Activated CD4-positive, alpha-beta memory T cell treated with anti-CD3 and anti-CD28 coated beads for 36 hours (primary cell): ENCODE measurements at regions of chr11 and their contacts with region 1.

Region 1: GRCh38 chr11:65329944-65330403 is 3.7 kb upstream of the DPF2 start:
- DNase-seq: peak; percentile 88
- H3K4me3 Mint-ChIP-seq: no peak overlapping the region
- H3K27ac Mint-ChIP-seq: no peak overlapping the region
- H3K4me1 Mint-ChIP-seq: peaks cover 12% of the 10 kb centered on the region
- H3K27me3 Mint-ChIP-seq: peaks cover 3% of the 10 kb centered on the region

Region 2: GRCh38 chr11:64854534-64855429 is 475.2 kb before region 1 on chr11:
- CTCF ChIA-PET with region 1: no interaction called
- POLR2A ChIA-PET with region 1: interaction called, 4 read pairs
- intact Hi-C with region 1: loop called (anchors 5 kb)
- DNase-seq: peak; percentile 75
- H3K4me3 Mint-ChIP-seq: peak overlapping the region; percentile 45
- H3K27ac Mint-ChIP-seq: peak overlapping the region; percentile 79
- H3K4me1 Mint-ChIP-seq: peaks cover 88% of the 10 kb centered on the region
- H3K27me3 Mint-ChIP-seq: no peaks in the 10 kb centered on the region

Region 3: DNA sequence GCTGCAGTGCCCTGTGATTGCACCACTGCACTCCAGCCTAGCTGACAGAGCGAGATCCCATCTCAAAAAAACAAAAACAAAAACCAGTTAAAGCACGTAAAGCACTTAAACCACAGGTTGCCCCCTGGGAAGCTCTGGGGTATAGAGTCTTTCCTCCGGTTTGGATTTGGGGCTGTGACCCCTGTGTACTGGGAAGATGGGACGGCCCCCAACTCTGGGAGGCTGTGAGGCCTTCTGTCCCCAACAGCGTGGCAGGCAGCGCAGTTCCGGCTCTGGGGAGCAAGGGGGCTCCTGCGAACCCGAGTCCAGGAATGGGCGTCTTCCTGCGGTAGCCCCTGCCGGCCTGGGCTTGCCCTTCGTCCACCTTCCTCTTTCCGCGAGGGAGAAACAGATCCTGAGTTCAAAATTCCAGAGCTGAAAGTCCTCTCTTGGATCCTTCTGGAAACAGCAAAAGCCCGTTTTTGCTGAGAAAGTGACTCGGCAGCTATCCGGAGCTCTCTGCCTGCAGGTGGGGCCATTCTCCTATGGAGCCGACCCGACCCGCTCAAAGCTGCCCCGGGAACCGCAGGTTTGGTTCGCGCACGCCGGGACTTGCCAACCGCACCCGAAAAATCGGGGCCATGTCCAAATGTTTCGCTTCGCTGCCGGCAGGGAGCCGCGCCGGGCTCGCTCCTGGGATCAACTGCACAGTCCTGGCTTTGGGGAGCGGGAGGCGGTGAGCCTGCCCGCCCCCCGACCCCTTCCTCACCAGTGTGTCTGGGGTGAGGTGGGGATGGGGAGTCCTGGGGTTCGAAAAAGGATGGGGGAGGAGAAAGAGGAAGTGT is 104.5 kb before region 1 on chr11:
- CTCF ChIA-PET with region 1: interaction called, 109 read pairs
- POLR2A ChIA-PET with region 1: interaction called, 3 read pairs
- intact Hi-C with region 1: no loop called
- DNase-seq: peak; percentile 76
- H3K4me3 Mint-ChIP-seq: peak overlapping the region; percentile 72
- H3K27ac Mint-ChIP-seq: no peak overlapping the region
- H3K4me1 Mint-ChIP-seq: peaks cover 7% of the 10 kb centered on the region
- H3K27me3 Mint-ChIP-seq: peaks cover 24% of the 10 kb centered on the region

Region 4: DNA sequence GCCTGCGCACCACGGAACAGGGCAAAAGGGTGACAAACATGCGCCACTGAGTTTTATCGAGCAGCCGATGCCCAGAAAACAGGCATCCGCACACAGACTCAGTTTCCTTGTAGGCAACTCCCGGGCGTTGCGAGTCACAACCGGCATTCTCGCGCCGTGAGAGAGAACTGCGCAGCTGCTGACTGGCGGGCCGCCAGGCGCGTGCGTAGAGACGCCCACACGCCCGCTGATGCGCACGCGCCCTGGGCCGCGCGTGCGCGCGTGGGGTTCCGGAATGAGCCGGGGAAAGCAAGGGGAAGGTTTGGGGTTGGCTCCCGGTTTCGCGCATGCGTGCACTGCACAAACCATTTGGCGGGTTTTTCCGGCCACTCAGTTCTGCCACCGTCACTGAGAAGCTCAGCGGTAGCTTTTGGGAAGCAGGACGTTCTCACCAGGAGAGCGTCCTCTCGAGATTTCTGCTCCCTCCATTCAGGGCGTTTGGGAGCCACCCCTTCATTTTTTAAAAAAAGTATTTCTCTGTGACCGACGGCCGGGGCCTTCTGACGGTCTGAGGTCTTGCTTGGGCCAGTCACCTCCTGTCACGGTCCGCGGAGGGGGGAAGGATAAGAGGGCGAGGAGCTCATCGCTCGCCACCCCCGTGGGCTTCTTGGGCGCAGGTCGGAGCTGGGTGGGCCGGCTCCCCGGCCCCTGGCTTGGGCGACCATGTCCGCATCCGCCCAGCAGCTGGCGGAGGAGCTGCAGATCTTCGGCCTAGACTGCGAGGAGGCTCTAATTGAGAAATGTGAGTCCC is 68.2 kb before region 1 on chr11 and contains the start of gene POLA2:
- CTCF ChIA-PET with region 1: interaction called, 22 read pairs
- POLR2A ChIA-PET with region 1: interaction called, 23 read pairs
- intact Hi-C with region 1: loop called (anchors 2 kb)
- DNase-seq: peak; percentile 98
- H3K4me3 Mint-ChIP-seq: peak within 1 kb of the TSS; percentile 94
- H3K27ac Mint-ChIP-seq: peak within 1 kb of the TSS; percentile 94
- H3K4me1 Mint-ChIP-seq: peaks cover 36% of the 10 kb centered on the region
- H3K27me3 Mint-ChIP-seq: no peaks in the 10 kb centered on the region
- total RNA-seq, gene POLA2: 62.9 to 66.9 TPM

Region 5: DNA sequence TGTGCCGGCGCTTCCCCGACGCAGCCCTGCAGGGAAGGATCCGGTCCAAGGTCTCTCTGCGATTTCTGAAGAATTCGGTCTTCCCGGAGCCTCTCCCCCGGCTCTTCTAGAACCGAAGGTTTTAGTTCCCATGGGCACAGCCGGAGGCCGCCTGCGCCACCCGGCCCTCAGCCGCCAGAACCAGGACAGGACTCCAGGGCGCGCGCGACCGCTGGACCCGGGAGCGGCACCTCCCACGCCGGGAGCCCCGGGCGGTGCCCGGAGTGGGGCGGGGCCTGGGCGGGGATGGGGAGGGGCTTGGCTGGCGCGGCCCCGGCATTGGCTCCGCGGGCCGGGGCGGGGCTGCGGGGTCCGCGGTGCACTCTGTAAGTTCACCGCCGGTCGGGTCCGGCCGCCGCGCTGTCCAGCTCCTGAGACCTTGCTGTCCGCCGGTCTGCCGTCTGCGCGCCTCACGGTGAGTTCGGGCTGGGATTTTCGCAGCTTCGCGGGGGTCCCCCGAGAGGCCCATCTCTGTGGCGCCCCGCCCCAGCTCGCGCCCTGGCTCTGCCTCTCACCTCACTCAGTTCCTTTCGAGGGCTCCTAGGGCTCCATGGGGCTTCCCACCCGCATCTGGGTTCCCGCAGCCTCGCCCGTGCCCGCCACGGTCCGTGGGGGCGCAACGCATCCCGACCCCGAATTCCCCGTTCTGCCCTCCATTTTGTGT is 15.3 kb before region 1 on chr11 and contains the start of gene CDC42EP2:
- CTCF ChIA-PET with region 1: interaction called, 184 read pairs
- POLR2A ChIA-PET with region 1: interaction called, 19 read pairs
- intact Hi-C with region 1: loop called (anchors 2 kb)
- DNase-seq: peak; percentile 84
- H3K4me3 Mint-ChIP-seq: peak within 1 kb of the TSS; percentile 69
- H3K27ac Mint-ChIP-seq: no peak within 1 kb of the TSS
- H3K4me1 Mint-ChIP-seq: peaks cover 10% of the 10 kb centered on the region
- H3K27me3 Mint-ChIP-seq: peaks cover 10% of the 10 kb centered on the region
- total RNA-seq, gene CDC42EP2: 0.26 TPM in 1 of 2 experiments, not detected in the other

Region 6: DNA sequence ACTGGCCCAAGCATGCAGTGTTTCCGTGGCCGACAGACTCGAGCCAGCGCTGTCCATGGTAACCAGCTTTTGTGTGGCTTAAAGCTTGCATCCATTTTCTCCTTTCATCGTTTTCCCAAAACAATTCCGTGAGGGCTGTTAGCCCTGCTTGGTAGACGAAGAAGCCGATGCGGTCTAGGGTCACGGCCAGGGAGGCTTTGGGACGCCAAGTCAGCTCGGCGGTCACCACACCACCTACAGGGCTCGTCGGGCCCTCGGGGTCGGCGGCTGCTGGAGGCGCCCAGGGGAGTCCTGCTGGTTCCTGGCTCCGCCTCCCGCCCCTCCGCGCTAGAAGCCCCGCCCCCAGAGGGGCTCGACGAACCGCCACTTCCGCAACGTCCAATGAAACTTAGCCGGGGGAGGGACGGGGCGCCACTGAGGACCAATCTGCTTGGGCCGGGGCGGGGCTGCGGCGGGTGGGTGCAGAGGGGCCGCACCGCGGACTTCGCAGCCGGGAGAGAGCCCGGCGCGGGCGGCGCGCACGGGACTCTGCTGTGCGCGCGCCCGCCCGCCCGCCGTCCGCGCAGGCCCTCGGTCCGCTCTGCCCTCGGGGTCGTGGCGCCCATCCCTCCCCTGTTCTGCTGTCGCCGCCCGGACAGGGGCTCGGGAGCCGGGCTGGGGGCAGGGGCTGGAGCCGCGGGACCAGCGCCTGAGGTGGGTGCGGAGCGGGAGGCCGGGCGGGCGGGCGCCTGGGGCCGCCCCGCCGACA is 24.5 kb after region 1 on chr11 and contains the start of gene TIGD3:
- CTCF ChIA-PET with region 1: interaction called, 22 read pairs
- POLR2A ChIA-PET with region 1: interaction called, 4 read pairs
- intact Hi-C with region 1: loop called (anchors 2 kb)
- DNase-seq: peak; percentile 98
- H3K4me3 Mint-ChIP-seq: peak within 1 kb of the TSS; percentile 80
- H3K27ac Mint-ChIP-seq: peak within 1 kb of the TSS; percentile 60
- H3K4me1 Mint-ChIP-seq: peaks cover 12% of the 10 kb centered on the region
- H3K27me3 Mint-ChIP-seq: no peaks in the 10 kb centered on the region
- total RNA-seq, gene TIGD3: 0.73 to 1.00 TPM

Region 7: GRCh38 chr11:65497141-65498041 is 167.4 kb after region 1 on chr11:
- CTCF ChIA-PET with region 1: interaction called, 3 read pairs
- POLR2A ChIA-PET with region 1: interaction called, 10 read pairs
- intact Hi-C with region 1: no loop called
- DNase-seq: peak; percentile 99
- H3K4me3 Mint-ChIP-seq: no peak overlapping the region
- H3K27ac Mint-ChIP-seq: no peak overlapping the region
- H3K4me1 Mint-ChIP-seq: peaks cover 38% of the 10 kb centered on the region
- H3K27me3 Mint-ChIP-seq: peaks cover 10% of the 10 kb centered on the region

Region 8: GRCh38 chr11:65793144-65793581 is 463.2 kb after region 1 on chr11:
- CTCF ChIA-PET with region 1: no interaction called
- POLR2A ChIA-PET with region 1: no interaction called
- intact Hi-C with region 1: no loop called
- DNase-seq: no peak
- H3K4me3 Mint-ChIP-seq: no peak overlapping the region
- H3K27ac Mint-ChIP-seq: no peak overlapping the region
- H3K4me1 Mint-ChIP-seq: peaks cover 11% of the 10 kb centered on the region
- H3K27me3 Mint-ChIP-seq: peaks cover 20% of the 10 kb centered on the region